ENCODE measurements at regions of chr12 and their contacts with region 1.

Region 1: GRCh38 chr12:42589465-42590329 is at the start of gene PRICKLE1:
- DNase-seq: no peak
- ATAC-seq: peak; percentile 84
- H3K4me3 ChIP-seq: peak within 1 kb of the TSS; percentile 57 to 70
- H3K27ac ChIP-seq: no peak within 1 kb of the TSS; the same call in 1 of the 2 replicates
- H3K4me1 ChIP-seq: peaks cover 0 to 21% of the 10 kb centered on the region in 2 experiments; a peak in 3 of 4 replicates
- H3K27me3 ChIP-seq: peaks cover 9% of the 10 kb centered on the region; the same call in 1 of the 2 replicates
- CTCF ChIP-seq: no peak
- POLR2A ChIP-seq: no peak
- RAD21 ChIP-seq: no peak
- total RNA-seq, gene PRICKLE1: 1.3 TPM

Region 2: DNA sequence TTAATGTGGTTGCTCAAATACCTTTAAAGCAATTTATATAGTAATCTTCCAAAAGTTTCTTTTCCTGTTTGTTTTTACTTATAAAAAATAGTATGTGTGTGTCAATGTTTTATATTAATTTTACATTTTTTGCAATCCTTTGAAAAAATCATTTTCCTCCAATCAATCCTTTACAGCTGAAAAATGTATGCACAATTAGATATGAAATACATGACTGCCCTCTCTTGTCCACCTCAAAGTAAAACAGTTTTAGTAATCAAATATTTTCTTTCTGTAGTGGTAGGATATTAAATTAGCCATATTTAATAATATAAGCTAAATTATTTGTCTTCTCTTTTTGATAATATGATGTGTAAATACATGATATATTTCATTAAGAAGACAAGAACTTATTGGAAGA is 692.4 kb after region 1 on chr12:
- CTCF ChIA-PET with region 1: interaction called, 9 read pairs
- POLR2A ChIA-PET with region 1: no interaction called
- RAD21 ChIA-PET with region 1: interaction called in 1 of 2 experiments, 3 read pairs
- intact Hi-C with region 1: loop called (anchors 2 kb)
- DNase-seq: peak; percentile 16
- ATAC-seq: no peak
- H3K4me3 ChIP-seq: no peak overlapping the region
- H3K27ac ChIP-seq: no peak overlapping the region
- H3K4me1 ChIP-seq: no peaks in the 10 kb centered on the region
- H3K27me3 ChIP-seq: no peaks in the 10 kb centered on the region
- CTCF ChIP-seq: peak in 2 of 3 experiments; percentile 51; a peak in 3 of 6 replicates
- POLR2A ChIP-seq: no peak
- RAD21 ChIP-seq: peak; percentile 72

Region 3: DNA sequence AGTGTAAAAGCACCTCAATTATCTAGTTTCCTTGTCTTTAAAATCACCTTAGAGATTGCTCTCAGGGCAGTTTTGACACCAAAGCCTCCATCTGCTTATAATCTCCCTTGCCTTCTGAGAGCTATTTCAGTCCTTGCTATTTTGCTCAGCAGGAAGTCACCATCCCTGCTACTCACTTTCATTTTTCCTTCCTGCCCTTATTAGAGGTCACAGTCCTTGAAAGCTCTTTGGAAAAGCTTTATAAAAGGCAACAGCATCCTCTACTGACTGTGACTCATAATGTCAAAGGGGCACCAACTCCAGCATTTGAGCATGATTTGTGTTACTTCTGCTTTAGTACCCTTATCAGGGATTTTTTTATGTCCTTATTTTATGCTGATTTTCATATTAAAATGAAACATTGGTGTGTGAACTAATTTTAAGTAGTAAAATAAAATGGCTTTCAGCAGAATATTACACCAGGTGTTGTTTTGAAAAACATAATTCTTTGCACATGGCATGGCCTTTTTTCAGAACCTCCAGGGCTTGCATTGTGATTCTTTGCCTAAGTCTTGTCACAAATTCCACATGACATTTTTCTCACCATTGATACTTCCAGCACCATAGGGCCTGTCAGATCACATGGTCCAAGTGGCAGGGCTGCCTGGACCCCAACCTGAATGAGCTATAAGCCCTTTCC is 749.3 kb after region 1 on chr12:
- CTCF ChIA-PET with region 1: no interaction called
- POLR2A ChIA-PET with region 1: no interaction called
- RAD21 ChIA-PET with region 1: no interaction called
- intact Hi-C with region 1: loop called (anchors 5 kb)
- DNase-seq: peak; percentile 16
- ATAC-seq: peak; percentile 84
- H3K4me3 ChIP-seq: no peak overlapping the region
- H3K27ac ChIP-seq: no peak overlapping the region
- H3K4me1 ChIP-seq: peaks cover 2 to 11% of the 10 kb centered on the region in 2 experiments; a peak in 2 of 4 replicates
- H3K27me3 ChIP-seq: no peaks in the 10 kb centered on the region
- CTCF ChIP-seq: peak in 2 of 3 experiments; percentile 34 to 48; a peak in 3 of 6 replicates
- POLR2A ChIP-seq: no peak
- RAD21 ChIP-seq: peak; percentile 72

Measured in HCT116 (cell line).